HCT116 (cell line): ENCODE measurements at regions of chr6 and their contacts with region 1.

Region 1: DNA sequence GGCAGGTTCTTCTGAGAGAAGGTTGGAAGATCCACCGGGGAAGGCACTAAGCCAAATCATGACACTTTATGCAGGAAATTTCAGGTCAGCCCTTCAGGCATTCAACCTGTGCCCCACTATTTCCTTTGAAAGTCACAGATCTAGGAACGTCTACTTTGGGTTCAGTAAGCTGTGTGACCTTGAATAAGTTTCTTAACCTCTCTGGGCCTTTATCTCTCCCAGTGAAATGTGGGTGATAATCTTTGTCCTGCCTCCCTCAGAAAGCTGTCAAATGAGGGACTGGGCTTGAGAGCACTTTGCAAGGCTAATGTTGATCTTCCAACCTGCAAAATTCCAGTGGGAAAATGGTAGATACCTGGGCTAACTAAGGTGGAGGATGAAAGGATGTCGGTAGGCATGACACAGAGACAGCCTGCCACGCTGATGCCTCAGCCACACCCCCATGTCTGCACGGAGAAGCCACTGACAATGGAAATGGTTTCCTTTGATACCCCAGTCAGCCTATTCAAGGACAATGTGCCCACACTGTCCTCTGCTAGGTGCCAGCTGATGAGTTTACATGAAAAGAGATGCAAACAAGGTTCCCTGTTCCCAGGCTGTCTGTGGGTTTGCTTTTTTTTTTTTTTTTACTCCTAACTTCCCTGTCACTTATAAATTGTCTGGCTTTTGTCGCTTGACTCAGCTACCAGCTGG is 9.3 kb downstream of the BNIP5 start:
- DNase-seq: no peak
- ATAC-seq: no peak
- H3K4me3 ChIP-seq: no peak overlapping the region
- H3K27ac ChIP-seq: no peak overlapping the region
- H3K4me1 ChIP-seq: no peaks in the 10 kb centered on the region
- H3K27me3 ChIP-seq: no peaks in the 10 kb centered on the region
- CTCF ChIP-seq: no peak
- POLR2A ChIP-seq: no peak
- RAD21 ChIP-seq: no peak

Region 2: GRCh38 chr6:36340618-36341454 is 13.5 kb after region 1 on chr6:
- CTCF ChIA-PET with region 1: interaction called, 20 read pairs
- POLR2A ChIA-PET with region 1: no interaction called
- RAD21 ChIA-PET with region 1: no interaction called
- intact Hi-C with region 1: no loop called
- DNase-seq: peak; percentile 48
- ATAC-seq: peak; percentile 92
- H3K4me3 ChIP-seq: peak overlapping the region; percentile 33 to 49
- H3K27ac ChIP-seq: no peak overlapping the region
- H3K4me1 ChIP-seq: peaks cover 5 to 13% of the 10 kb centered on the region in 2 experiments
- H3K27me3 ChIP-seq: no peaks in the 10 kb centered on the region
- CTCF ChIP-seq: peak; percentile 67 to 99 (median 96)
- POLR2A ChIP-seq: no peak
- RAD21 ChIP-seq: peak; percentile 62